Activated CD4-positive, alpha-beta T cell treated with anti-CD3 and anti-CD28 coated beads, Interleukin-2, amount 10 ng/mL, durations not matched to agents 24 days and 14 days (primary cell): ENCODE measurements at regions of chr12 and their contacts with region 1.

Region 1: DNA sequence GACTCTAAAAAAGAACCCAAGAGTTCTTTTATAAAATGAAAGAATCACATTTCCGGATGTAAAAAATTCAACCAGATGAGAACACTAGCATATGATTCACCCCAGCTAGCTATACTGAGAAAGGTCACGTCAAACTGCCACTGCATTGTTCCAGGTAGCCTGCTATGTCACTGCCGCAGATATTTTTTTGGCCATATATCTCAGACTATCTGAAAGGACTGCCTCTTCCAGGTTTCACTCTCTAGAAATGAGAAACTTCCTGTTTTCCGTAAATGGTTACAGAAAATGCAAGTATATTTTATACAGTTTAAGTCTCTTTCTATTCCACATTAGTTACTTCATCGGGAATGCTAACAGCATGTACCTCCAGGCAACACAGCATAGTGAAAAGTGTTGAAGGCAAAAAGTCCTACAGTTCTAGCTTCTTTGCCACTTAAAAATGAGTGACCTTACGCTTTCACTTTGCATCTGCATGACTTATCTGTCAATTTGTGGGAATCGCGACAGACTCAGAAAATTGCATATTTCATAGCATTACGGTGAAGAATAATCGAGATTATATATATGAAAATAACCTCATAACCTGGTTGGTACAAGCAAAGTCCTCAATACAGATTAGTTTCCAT is 105.2 kb downstream of the MED13L start:
- DNase-seq: peak; percentile 84
- H3K4me3 Mint-ChIP-seq: peak overlapping the region; percentile 81
- H3K27ac Mint-ChIP-seq: peak overlapping the region; percentile 95
- H3K4me1 Mint-ChIP-seq: peaks cover 48% of the 10 kb centered on the region
- H3K27me3 Mint-ChIP-seq: no peaks in the 10 kb centered on the region

Region 2: GRCh38 chr12:115916910-115917668 is 255.2 kb before region 1 on chr12:
- intact Hi-C with region 1: no loop called
- DNase-seq: peak; percentile 92
- H3K4me3 Mint-ChIP-seq: no peak overlapping the region
- H3K27ac Mint-ChIP-seq: no peak overlapping the region
- H3K4me1 Mint-ChIP-seq: no peaks in the 10 kb centered on the region
- H3K27me3 Mint-ChIP-seq: peaks cover 21% of the 10 kb centered on the region

Region 3: GRCh38 chr12:116194935-116195431 is 22.6 kb after region 1 on chr12:
- intact Hi-C with region 1: loop called (anchors 1 kb)
- DNase-seq: peak; percentile 87
- H3K4me3 Mint-ChIP-seq: peak overlapping the region; percentile 65
- H3K27ac Mint-ChIP-seq: peak overlapping the region; percentile 82
- H3K4me1 Mint-ChIP-seq: peaks cover 36% of the 10 kb centered on the region
- H3K27me3 Mint-ChIP-seq: no peaks in the 10 kb centered on the region